Activated CD4-positive, alpha-beta T cell treated with anti-CD3 and anti-CD28 coated beads, Interleukin-2, amount 10 ng/mL, durations not matched to agents 7 days and 5 days (primary cell): ENCODE measurements at regions of chrX and their contacts with region 1.

Region 1: GRCh38 chrX:10119399-10119990 is 37.3 kb upstream of the CLCN4 start:
- DNase-seq: peak; percentile 77
- H3K4me3 Mint-ChIP-seq: no peak overlapping the region
- H3K27ac Mint-ChIP-seq: peak overlapping the region; percentile 7
- H3K4me1 Mint-ChIP-seq: peaks cover 4% of the 10 kb centered on the region
- H3K27me3 Mint-ChIP-seq: no peaks in the 10 kb centered on the region

Region 2: DNA sequence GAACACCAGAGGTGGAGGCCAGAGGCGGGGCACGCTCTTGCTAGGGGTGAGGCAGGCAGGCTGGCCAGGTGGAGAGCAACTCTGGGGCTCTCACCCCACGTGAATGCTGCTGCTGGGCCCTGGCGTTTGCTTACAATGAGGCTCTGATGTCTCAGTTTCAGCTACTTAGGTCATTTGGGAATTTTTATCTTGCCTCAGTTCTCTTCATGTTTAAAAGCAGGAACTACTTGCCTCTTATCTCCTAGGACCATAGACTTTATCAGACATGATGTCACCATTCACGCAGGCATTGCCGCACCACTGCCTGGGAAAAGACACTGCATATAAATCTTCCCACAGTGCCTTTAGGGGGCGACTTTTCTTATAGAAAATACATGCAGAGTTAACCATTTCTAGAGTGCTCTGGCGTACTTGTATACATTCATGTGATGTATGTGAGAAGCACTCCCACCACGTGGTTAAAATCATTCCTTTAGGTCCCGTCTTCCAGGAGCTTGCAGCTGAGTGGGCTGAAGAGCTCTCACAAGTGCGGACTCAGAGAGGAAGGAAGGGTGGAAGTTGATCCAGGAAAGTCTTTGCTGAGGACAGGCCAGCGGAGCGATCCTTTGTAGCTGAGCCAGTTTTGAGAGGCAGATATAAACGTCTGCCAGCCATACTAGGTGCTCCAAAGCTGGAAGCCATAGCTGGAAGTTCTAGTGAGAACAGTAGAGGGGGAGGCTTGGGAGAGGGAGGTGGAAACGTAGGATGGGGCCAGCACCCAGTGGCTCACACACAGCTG is 236.6 kb before region 1 on chrX:
- CTCF ChIA-PET with region 1: interaction called, 13 read pairs
- POLR2A ChIA-PET with region 1: no interaction called
- DNase-seq: no peak
- H3K4me3 Mint-ChIP-seq: no peak overlapping the region
- H3K27ac Mint-ChIP-seq: no peak overlapping the region
- H3K4me1 Mint-ChIP-seq: no peaks in the 10 kb centered on the region
- H3K27me3 Mint-ChIP-seq: no peaks in the 10 kb centered on the region

Region 3: DNA sequence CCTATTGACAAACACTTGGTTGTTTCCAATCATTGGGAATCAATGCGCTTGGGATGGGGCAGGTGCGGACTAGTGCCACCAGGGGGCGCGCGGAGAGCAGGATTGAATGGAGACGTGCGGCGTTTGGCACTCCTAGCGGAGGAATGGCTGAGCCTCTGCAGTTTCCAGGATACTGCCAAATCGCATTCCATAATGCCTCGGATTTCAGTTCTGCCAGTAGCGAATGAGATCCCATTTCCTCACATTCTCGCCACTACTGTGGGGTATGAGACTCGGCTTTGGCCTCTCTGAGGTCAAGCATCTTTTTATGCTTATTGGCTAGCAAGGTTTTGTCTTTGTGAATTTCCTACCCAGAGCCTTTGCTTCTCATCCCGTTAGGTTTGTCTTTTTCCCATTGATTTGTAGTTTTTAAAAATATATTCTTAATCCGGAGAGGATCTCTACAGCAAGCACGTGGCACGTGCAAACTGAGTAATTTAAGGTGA is 123.6 kb before region 1 on chrX:
- CTCF ChIA-PET with region 1: interaction called, 115 read pairs
- POLR2A ChIA-PET with region 1: no interaction called
- DNase-seq: peak; percentile 73
- H3K4me3 Mint-ChIP-seq: no peak overlapping the region
- H3K27ac Mint-ChIP-seq: no peak overlapping the region
- H3K4me1 Mint-ChIP-seq: peaks cover 4% of the 10 kb centered on the region
- H3K27me3 Mint-ChIP-seq: peaks cover 2% of the 10 kb centered on the region

Region 4: GRCh38 chrX:10077425-10078188 is 41.9 kb before region 1 on chrX:
- CTCF ChIA-PET with region 1: interaction called, 15 read pairs
- POLR2A ChIA-PET with region 1: no interaction called
- DNase-seq: no peak
- H3K4me3 Mint-ChIP-seq: no peak overlapping the region
- H3K27ac Mint-ChIP-seq: no peak overlapping the region
- H3K4me1 Mint-ChIP-seq: peaks cover 5% of the 10 kb centered on the region
- H3K27me3 Mint-ChIP-seq: no peaks in the 10 kb centered on the region

Region 5: DNA sequence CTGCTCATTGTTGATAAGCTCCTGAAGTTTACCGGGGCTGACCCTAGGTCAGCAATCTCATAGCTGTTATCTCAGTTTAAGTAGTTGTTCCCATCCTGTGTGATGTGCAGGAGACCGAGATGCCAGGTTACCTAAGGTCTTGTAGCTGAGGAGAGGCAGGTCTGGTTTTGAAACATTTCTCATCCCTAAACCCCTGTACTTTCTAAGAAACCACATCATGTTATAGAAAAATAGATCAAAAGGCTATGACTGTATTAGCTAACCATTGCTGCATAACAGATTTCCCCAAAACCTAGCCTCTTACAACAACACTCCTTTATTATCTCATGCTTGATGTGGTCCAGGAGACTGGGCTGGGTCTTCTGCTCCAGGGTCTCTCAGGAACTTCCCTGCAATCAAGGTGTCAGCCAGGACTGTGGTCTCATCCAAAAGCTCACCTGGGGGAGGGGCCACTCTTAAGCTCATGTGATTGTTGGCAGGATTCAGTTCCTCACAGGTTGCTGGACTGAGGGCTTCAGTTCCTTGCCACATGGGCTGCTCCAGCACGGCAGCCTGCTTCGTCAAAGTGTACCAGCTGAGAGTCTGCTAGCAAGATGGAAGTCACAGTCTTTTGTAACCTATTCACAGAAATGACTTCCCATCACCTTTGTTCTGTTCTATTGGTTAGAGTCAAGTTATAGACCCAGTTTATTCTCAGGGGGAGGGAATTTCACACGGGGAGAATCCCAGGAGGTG is 23.6 kb before region 1 on chrX:
- CTCF ChIA-PET with region 1: interaction called, 18 read pairs
- POLR2A ChIA-PET with region 1: no interaction called
- DNase-seq: no peak
- H3K4me3 Mint-ChIP-seq: no peak overlapping the region
- H3K27ac Mint-ChIP-seq: peak overlapping the region; percentile 46
- H3K4me1 Mint-ChIP-seq: peaks cover 45% of the 10 kb centered on the region
- H3K27me3 Mint-ChIP-seq: no peaks in the 10 kb centered on the region

Region 6: DNA sequence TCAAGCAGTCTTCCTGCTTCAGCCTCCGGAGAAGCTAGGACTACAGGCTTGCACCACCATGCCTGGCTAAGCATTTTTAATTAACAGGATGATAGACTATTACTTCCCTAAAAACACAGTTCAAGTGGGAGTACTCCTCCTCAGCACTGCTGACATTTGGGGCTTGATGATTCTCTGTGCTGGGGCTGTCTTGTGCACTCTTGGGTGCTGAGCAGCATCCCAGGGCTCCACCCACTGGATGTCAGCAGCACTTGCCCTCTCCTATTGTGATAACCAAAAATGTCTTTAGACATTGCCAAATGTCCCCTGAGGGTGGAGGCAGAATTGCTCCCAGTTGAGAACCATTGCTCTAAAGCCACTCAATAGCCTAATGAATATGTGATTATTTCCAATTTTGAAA is 97.7 kb after region 1 on chrX:
- CTCF ChIA-PET with region 1: no interaction called
- POLR2A ChIA-PET with region 1: no interaction called
- DNase-seq: no peak
- H3K4me3 Mint-ChIP-seq: no peak overlapping the region
- H3K27ac Mint-ChIP-seq: no peak overlapping the region
- H3K4me1 Mint-ChIP-seq: no peaks in the 10 kb centered on the region
- H3K27me3 Mint-ChIP-seq: no peaks in the 10 kb centered on the region

Region 7: GRCh38 chrX:10240918-10241317 is 121.4 kb after region 1 on chrX:
- CTCF ChIA-PET with region 1: no interaction called
- POLR2A ChIA-PET with region 1: no interaction called
- DNase-seq: no peak
- H3K4me3 Mint-ChIP-seq: no peak overlapping the region
- H3K27ac Mint-ChIP-seq: no peak overlapping the region
- H3K4me1 Mint-ChIP-seq: no peaks in the 10 kb centered on the region
- H3K27me3 Mint-ChIP-seq: no peaks in the 10 kb centered on the region